Right cardiac atrium (tissue), 5 donors: ENCODE measurements at regions of chr13 and their contacts with region 1.

Region 1: DNA sequence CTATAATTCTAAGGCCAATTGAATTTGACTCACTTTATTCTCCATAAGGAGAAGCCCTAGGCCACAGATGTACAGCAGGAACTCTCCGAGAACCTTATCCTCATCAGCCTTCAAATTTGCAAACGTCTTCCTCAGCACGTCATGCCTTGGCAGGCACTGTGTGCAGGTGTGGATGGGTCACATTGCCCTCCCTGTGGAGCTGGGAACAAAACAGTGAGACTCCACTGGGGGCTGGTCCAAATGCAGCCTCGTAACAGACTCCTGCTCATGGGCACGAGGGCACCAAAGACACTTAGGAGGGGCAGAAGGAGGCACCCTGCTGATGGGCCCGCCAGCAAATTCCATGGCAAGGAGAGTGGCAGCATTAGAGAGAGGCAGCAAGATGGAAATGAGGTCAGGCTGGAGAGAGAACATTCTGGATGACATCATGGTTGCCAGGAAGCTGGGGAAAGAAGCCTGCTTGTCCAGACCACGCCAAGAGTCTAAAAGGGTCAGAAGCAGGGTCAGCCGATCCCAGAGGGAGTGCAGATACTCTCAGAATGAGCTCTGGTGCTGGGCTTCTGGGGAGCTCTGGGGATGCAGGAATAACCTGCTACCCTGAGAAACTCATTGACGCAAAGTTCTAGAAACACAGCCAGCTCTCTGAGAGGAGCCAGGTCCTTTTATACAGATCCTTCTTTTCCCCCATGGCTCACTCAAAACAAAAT is 242.2 kb downstream of the B3GLCT start:
- DNase-seq: peak; percentile 75 to 86 (median 79)
- ATAC-seq: peak; percentile 92 to 95
- H3K4me3 ChIP-seq: no peak overlapping the region
- H3K27ac ChIP-seq: peak overlapping the region; percentile 41
- H3K4me1 ChIP-seq: no peaks in the 10 kb centered on the region
- H3K27me3 ChIP-seq: no peaks in the 10 kb centered on the region

Region 2: GRCh38 chr13:31476266-31476665 is 34.3 kb after region 1 on chr13:
- intact Hi-C with region 1: loop called in 1 of 4 experiments (anchors 5 kb)
- DNase-seq: peak; percentile 39 to 79 (median 40)
- ATAC-seq: peak; percentile 71 to 84
- H3K4me3 ChIP-seq: no peak overlapping the region
- H3K27ac ChIP-seq: no peak overlapping the region
- H3K4me1 ChIP-seq: no peaks in the 10 kb centered on the region
- H3K27me3 ChIP-seq: no peaks in the 10 kb centered on the region

Region 3: GRCh38 chr13:31625115-31625514 is 183.2 kb after region 1 on chr13:
- intact Hi-C with region 1: no loop called
- DNase-seq: no peak
- ATAC-seq: no peak
- H3K4me3 ChIP-seq: no peak overlapping the region
- H3K27ac ChIP-seq: no peak overlapping the region
- H3K4me1 ChIP-seq: no peaks in the 10 kb centered on the region
- H3K27me3 ChIP-seq: no peaks in the 10 kb centered on the region

Region 4: DNA sequence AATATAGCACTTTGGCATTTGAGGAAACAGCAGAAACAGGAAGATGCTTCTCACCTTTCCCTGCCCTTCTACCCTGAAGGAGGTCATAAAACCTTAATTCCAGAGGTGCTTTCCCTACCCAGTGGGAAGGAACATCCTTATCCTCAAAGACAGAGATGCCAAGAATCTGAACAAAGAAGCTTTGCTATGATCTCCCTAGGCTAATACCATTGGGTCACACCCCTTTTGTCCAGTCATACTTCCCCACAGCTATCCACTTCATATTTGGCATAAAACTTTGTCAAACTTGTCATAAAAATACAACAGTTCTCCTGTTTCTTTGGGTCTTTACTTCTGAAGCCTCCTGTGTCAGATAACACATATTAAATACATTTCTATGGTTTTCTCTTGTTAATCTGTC is 275.6 kb after region 1 on chr13:
- intact Hi-C with region 1: no loop called
- DNase-seq: no peak
- ATAC-seq: no peak
- H3K4me3 ChIP-seq: no peak overlapping the region
- H3K27ac ChIP-seq: no peak overlapping the region
- H3K4me1 ChIP-seq: no peaks in the 10 kb centered on the region
- H3K27me3 ChIP-seq: peaks cover 4% of the 10 kb centered on the region